Endothelial cell of umbilical vein (primary cell): ENCODE measurements at regions of chr5 and their contacts with region 1.

Region 1: GRCh38 chr5:157743163-157744050 is at the start of gene LSM11:
- DNase-seq: peak; percentile 93
- H3K4me3 ChIP-seq: peak within 1 kb of the TSS; percentile 57 to 67 (median 67)
- H3K27ac ChIP-seq: peak within 1 kb of the TSS; percentile 58
- H3K4me1 ChIP-seq: peaks cover 14% of the 10 kb centered on the region
- H3K27me3 ChIP-seq: no peaks in the 10 kb centered on the region
- CTCF ChIP-seq: peak; percentile 99
- POLR2A ChIP-seq: no peak
- total RNA-seq, gene LSM11: 6.1 and 7.3 TPM in 2 replicates

Region 2: DNA sequence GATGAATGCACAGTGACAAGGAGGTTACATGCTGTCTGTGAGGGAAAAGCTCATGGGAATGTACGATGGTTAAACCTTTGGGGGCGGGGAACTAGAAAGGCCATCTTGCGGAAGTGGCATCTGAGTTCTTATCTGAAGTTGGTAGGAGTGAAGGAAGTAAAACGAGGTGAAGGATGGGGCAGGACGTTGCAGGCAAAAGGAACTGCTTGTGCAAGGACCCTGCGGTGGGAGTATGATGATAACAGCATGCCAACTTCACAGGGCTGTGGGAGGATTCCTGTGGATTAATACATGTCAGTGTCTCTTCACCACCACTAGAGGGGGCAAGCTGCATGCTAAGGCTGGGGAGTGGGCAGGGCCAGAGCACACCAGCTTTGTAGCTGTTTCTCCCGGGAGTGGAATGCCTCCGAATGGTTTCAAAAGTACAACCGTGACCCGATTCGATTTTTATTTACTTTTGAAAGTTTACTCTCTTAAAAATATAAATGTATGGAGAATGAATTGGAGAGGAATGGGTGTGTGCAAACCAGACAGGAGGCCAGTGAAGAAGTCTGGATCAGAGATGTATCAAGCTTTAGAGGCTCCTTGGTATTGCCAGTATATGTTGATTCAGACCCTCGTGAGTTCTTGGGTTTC is 415.0 kb before region 1 on chr5:
- CTCF ChIA-PET with region 1: interaction called, 69 read pairs
- POLR2A ChIA-PET with region 1: no interaction called
- dilution Hi-C with region 1: no loop called
- intact Hi-C with region 1: loop called (anchors 1 kb)
- DNase-seq: peak; percentile 71
- H3K4me3 ChIP-seq: no peak overlapping the region
- H3K27ac ChIP-seq: no peak overlapping the region
- H3K4me1 ChIP-seq: no peaks in the 10 kb centered on the region
- H3K27me3 ChIP-seq: no peaks in the 10 kb centered on the region
- CTCF ChIP-seq: peak; percentile 91 to 93
- POLR2A ChIP-seq: no peak

Region 3: GRCh38 chr5:157354800-157355199 is 388.6 kb before region 1 on chr5:
- CTCF ChIA-PET with region 1: interaction called, 11 read pairs
- POLR2A ChIA-PET with region 1: no interaction called
- dilution Hi-C with region 1: no loop called
- intact Hi-C with region 1: no loop called
- DNase-seq: no peak
- H3K4me3 ChIP-seq: no peak overlapping the region
- H3K27ac ChIP-seq: no peak overlapping the region
- H3K4me1 ChIP-seq: peaks cover 13% of the 10 kb centered on the region
- H3K27me3 ChIP-seq: no peaks in the 10 kb centered on the region
- CTCF ChIP-seq: peak; percentile 17 to 31
- POLR2A ChIP-seq: no peak

Region 4: DNA sequence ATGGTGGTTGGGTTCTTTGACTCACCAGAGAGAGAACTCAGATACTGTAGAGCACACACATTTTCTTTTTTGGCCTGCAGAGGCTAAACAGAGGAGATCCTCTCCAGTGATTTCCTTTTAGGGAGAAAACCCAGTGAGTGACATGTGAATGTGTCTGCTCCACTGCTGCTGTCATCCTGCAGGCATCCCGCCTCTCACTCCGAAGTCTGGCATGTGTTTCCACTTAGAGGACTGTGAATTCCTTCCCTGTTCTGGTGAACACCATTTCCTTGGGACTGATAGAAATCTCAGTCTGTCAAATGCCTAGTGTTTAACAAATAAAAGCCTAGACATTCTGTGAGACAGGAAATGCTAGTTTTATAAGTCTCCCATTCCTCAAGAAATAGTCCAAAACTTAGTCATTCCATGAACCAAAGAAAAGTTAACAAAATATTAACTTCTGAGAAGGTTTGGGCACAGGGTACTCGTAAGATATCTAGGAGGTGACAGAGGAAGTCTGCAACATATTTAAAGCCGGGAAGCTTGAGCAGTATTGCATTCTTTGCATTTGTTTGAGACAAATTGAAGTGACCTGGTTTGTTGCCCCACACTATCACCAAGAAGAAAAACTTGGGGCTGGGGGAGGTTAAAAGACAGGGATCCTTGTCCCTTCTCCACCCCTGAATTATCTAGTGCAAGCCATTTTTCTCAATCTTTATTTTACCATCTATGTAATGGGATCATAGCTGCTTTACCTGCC is 358.3 kb before region 1 on chr5:
- CTCF ChIA-PET with region 1: interaction called, 5 read pairs
- POLR2A ChIA-PET with region 1: no interaction called
- dilution Hi-C with region 1: no loop called
- intact Hi-C with region 1: loop called (anchors 1 kb)
- DNase-seq: peak; percentile 91
- H3K4me3 ChIP-seq: no peak overlapping the region
- H3K27ac ChIP-seq: peak overlapping the region; percentile 88
- H3K4me1 ChIP-seq: peaks cover 57% of the 10 kb centered on the region
- H3K27me3 ChIP-seq: no peaks in the 10 kb centered on the region
- CTCF ChIP-seq: no peak
- POLR2A ChIP-seq: no peak

Region 5: DNA sequence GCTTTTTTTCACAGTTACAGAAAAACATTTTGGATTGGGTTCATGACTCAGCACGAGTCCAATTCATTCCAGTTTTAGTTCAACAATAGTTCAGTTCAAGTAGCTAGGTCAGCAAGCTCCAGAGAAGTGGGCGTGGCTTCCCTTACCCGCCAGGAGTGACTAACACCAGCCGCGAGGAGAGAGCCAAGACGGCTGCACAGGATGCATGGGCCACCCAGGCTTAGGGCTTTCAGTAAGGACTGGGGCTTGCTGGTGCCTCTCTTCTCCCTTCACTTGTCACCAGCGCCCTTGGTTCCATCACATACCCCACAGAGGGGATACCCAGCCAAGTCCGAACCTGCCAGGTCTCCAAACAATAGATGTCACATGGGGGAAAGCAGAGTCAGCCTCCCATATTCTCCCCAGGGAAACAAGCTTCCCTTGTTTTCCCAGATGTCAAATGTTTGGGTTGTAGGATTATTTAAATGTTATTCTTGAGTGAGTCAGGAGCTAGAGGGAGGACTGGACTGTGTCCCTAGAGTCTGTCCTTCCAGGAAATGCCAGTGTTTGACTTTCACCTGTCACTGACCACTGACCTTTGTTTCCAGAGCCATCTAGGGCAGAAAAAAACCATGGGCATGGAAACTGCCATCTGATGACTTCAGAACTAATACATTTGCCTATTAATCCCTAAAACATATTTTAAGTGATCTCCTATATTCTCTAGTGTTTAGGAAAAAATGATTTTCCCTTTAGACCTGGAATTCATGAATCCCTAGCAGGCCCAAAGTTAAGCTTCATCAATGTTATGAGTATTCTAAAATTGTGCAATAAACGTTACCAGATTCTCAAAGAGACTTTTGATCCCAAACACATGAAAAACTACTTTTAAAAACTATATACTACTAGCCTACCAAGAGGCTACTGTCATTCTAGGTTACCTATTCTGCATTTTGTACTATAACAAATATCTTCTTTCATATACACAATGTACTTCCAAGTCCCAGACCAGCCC is 231.5 kb before region 1 on chr5:
- CTCF ChIA-PET with region 1: interaction called, 7 read pairs
- POLR2A ChIA-PET with region 1: no interaction called
- dilution Hi-C with region 1: no loop called
- intact Hi-C with region 1: loop called (anchors 2 kb)
- DNase-seq: peak; percentile 98
- H3K4me3 ChIP-seq: no peak overlapping the region
- H3K27ac ChIP-seq: peak overlapping the region; percentile 83
- H3K4me1 ChIP-seq: peaks cover 31% of the 10 kb centered on the region
- H3K27me3 ChIP-seq: no peaks in the 10 kb centered on the region
- CTCF ChIP-seq: no peak
- POLR2A ChIP-seq: no peak

Region 6: DNA sequence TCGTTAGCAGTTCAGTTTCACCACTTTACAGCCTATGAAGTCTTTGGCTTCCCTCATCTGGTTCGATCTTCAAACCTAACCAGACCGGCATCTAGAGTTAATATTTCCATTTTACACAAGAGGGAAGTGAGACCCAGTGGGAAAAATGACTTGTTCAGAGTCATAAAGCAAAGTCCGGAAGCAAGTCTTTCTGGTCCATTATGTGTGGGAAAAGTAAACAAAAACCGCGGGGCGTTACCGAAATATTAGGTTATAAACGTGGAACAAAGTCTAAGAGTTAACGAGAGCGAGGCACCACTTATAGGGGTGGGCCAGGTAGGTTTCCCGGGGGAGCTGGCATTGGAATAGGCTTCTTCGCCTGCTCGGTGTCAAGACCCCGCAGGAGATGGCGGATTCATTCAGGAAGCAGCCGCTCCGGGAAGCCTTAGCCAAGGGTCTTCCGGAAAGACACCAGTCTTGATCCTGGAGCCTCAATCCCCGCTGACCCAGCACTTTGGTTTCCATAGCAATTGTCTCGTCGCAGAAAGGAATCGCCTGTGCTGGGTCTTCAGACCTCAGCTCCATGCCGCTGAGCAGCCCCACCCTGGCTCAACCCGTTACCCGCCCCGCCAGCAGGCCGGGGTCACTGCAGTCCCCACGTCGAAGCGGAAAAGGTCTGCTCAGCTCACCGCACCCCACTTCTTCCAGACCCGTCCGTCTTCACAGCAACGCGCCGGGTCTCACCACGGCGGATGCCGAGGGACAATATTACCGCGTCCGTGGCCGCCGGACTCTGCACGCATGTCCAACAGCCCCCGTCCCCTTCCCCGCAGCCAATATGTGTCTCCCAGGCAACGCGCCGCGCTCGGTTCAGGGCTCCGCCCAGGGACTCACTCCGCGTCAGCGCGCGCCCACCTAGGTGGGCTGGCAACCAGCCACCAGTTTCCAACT is 72.5 kb before region 1 on chr5 and contains the start of gene C5orf52:
- CTCF ChIA-PET with region 1: interaction called, 7 read pairs
- POLR2A ChIA-PET with region 1: no interaction called
- dilution Hi-C with region 1: no loop called
- intact Hi-C with region 1: loop called (anchors 1 kb)
- DNase-seq: peak; percentile 54
- H3K4me3 ChIP-seq: peak within 1 kb of the TSS; percentile 41 to 63 (median 47)
- H3K27ac ChIP-seq: no peak within 1 kb of the TSS
- H3K4me1 ChIP-seq: peaks cover 13% of the 10 kb centered on the region
- H3K27me3 ChIP-seq: peaks cover 7% of the 10 kb centered on the region in 2 experiments
- CTCF ChIP-seq: no peak
- POLR2A ChIP-seq: no peak
- total RNA-seq, gene C5orf52: not detected in 2 replicates

Region 7: GRCh38 chr5:157731272-157732129 is 11.9 kb before region 1 on chr5 and contains the start of gene THG1L:
- CTCF ChIA-PET with region 1: interaction called, 24 read pairs
- POLR2A ChIA-PET with region 1: no interaction called
- dilution Hi-C with region 1: no loop called
- intact Hi-C with region 1: loop called (anchors 1 kb)
- DNase-seq: peak; percentile 98
- H3K4me3 ChIP-seq: peak within 1 kb of the TSS in 2 of 3 experiments; percentile 65 to 79
- H3K27ac ChIP-seq: peak within 1 kb of the TSS; percentile 33
- H3K4me1 ChIP-seq: no peaks in the 10 kb centered on the region
- H3K27me3 ChIP-seq: no peaks in the 10 kb centered on the region
- CTCF ChIP-seq: no peak
- POLR2A ChIP-seq: peak; percentile 73
- total RNA-seq, gene THG1L: 3.7 and 7.6 TPM in 2 replicates

Region 8: GRCh38 chr5:157772127-157772526 is 28.7 kb after region 1 on chr5:
- CTCF ChIA-PET with region 1: no interaction called
- POLR2A ChIA-PET with region 1: no interaction called
- dilution Hi-C with region 1: no loop called
- intact Hi-C with region 1: no loop called
- DNase-seq: no peak
- H3K4me3 ChIP-seq: no peak overlapping the region
- H3K27ac ChIP-seq: no peak overlapping the region
- H3K4me1 ChIP-seq: no peaks in the 10 kb centered on the region
- H3K27me3 ChIP-seq: peaks cover 0 to 4% of the 10 kb centered on the region in 2 experiments
- CTCF ChIP-seq: no peak
- POLR2A ChIP-seq: no peak

Region 9: DNA sequence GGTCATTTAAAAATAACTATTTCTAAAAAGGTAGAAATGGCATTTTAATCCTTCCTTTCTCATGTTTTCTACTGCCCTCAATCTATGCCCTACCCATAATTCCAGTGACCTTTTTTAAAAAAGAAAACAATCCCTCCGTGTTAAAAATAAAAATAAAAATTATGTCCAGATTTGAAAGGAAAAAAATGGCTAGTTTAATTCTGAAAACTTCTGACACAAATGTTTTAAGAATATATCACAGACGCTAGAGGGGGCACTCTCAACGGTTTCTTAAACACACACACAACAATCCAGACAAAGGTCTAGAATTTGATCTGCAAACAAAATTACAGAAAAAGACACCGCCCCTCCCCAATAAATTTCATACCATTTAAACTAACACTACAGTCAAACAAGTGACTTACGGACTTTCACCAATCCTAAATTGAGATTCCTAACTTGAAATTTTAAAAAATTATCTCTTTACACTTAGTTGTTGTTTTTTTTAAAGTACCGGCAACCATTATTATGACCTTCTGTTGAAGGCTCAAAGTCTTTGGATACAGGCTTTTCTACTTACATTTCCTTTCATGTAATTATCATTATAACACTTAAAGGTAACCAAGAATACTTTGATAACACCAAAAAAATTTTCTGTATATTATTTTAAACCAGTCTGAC is 77.3 kb after region 1 on chr5:
- CTCF ChIA-PET with region 1: no interaction called
- POLR2A ChIA-PET with region 1: no interaction called
- dilution Hi-C with region 1: no loop called
- intact Hi-C with region 1: no loop called
- DNase-seq: peak; percentile 80
- H3K4me3 ChIP-seq: no peak overlapping the region
- H3K27ac ChIP-seq: no peak overlapping the region
- H3K4me1 ChIP-seq: peaks cover 14% of the 10 kb centered on the region
- H3K27me3 ChIP-seq: no peaks in the 10 kb centered on the region
- CTCF ChIP-seq: peak; percentile 36 to 39
- POLR2A ChIP-seq: no peak

Region 10: GRCh38 chr5:157858527-157859226 is 115.3 kb after region 1 on chr5 and contains the start of gene CLINT1:
- CTCF ChIA-PET with region 1: no interaction called
- POLR2A ChIA-PET with region 1: no interaction called
- dilution Hi-C with region 1: no loop called
- intact Hi-C with region 1: no loop called
- DNase-seq: peak; percentile 86
- H3K4me3 ChIP-seq: peak within 1 kb of the TSS; percentile 68 to 95 (median 93)
- H3K27ac ChIP-seq: peak within 1 kb of the TSS; percentile 81
- H3K4me1 ChIP-seq: peaks cover 14% of the 10 kb centered on the region
- H3K27me3 ChIP-seq: no peaks in the 10 kb centered on the region
- CTCF ChIP-seq: no peak
- POLR2A ChIP-seq: peak; percentile 74
- total RNA-seq, gene CLINT1: 76.6 and 79.6 TPM in 2 replicates

Region 11: GRCh38 chr5:157917899-157918809 is 174.7 kb after region 1 on chr5:
- CTCF ChIA-PET with region 1: no interaction called
- POLR2A ChIA-PET with region 1: no interaction called
- dilution Hi-C with region 1: no loop called
- intact Hi-C with region 1: no loop called
- DNase-seq: peak; percentile 74
- H3K4me3 ChIP-seq: no peak overlapping the region
- H3K27ac ChIP-seq: no peak overlapping the region
- H3K4me1 ChIP-seq: peaks cover 8% of the 10 kb centered on the region
- H3K27me3 ChIP-seq: no peaks in the 10 kb centered on the region
- CTCF ChIP-seq: peak; percentile 57 to 64
- POLR2A ChIP-seq: no peak